Endothelial cell of umbilical vein (primary cell): ENCODE measurements at regions of chr3 and their contacts with region 1.

Region 1: GRCh38 chr3:88003115-88003755 is 55.6 kb downstream of the CGGBP1 start:
- DNase-seq: peak; percentile 64
- H3K4me3 ChIP-seq: no peak overlapping the region
- H3K27ac ChIP-seq: no peak overlapping the region
- H3K4me1 ChIP-seq: peaks cover 2% of the 10 kb centered on the region
- H3K27me3 ChIP-seq: peaks cover 0 to 7% of the 10 kb centered on the region in 2 experiments
- CTCF ChIP-seq: peak; percentile 55
- POLR2A ChIP-seq: no peak

Region 2: GRCh38 chr3:86774082-86774691 is 1229.0 kb before region 1 on chr3:
- CTCF ChIA-PET with region 1: interaction called, 29 read pairs
- POLR2A ChIA-PET with region 1: no interaction called
- dilution Hi-C with region 1: no loop called
- intact Hi-C with region 1: no loop called
- DNase-seq: peak; percentile 12
- H3K4me3 ChIP-seq: no peak overlapping the region
- H3K27ac ChIP-seq: no peak overlapping the region
- H3K4me1 ChIP-seq: no peaks in the 10 kb centered on the region
- H3K27me3 ChIP-seq: no peaks in the 10 kb centered on the region
- CTCF ChIP-seq: peak; percentile 11
- POLR2A ChIP-seq: no peak

Region 3: GRCh38 chr3:87350364-87351199 is 652.7 kb before region 1 on chr3:
- CTCF ChIA-PET with region 1: interaction called, 40 read pairs
- POLR2A ChIA-PET with region 1: no interaction called
- dilution Hi-C with region 1: no loop called
- intact Hi-C with region 1: loop called (anchors 1 kb)
- DNase-seq: peak; percentile 67
- H3K4me3 ChIP-seq: no peak overlapping the region
- H3K27ac ChIP-seq: no peak overlapping the region
- H3K4me1 ChIP-seq: no peaks in the 10 kb centered on the region
- H3K27me3 ChIP-seq: no peaks in the 10 kb centered on the region
- CTCF ChIP-seq: peak; percentile 71 to 78
- POLR2A ChIP-seq: no peak

Region 4: DNA sequence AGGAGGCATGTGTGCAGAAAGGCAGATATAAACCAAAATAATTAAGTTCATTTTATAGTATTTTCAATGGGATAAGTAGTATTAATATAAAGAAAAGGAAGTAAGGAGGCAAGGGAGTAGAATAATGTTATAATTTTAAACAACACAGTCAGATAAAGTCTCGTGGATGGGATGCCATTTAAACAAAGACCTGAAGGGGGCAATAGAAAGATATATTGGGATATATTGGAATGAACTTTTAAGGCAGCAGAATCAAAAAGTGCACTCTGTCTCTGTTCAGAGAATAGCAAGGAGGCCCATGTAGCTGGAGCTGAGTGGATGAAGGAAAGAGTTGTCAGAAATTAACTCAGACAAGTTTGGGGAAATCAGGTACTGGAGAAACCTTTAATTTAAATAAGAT is 103.2 kb before region 1 on chr3:
- CTCF ChIA-PET with region 1: interaction called, 12 read pairs
- POLR2A ChIA-PET with region 1: no interaction called
- dilution Hi-C with region 1: no loop called
- intact Hi-C with region 1: loop called (anchors 2 kb)
- DNase-seq: peak; percentile 8
- H3K4me3 ChIP-seq: no peak overlapping the region
- H3K27ac ChIP-seq: no peak overlapping the region
- H3K4me1 ChIP-seq: no peaks in the 10 kb centered on the region
- H3K27me3 ChIP-seq: peaks cover 2 to 3% of the 10 kb centered on the region in 2 experiments
- CTCF ChIP-seq: peak in 1 of 2 donors; percentile 9
- POLR2A ChIP-seq: no peak

Region 5: GRCh38 chr3:88019024-88019423 is 15.8 kb after region 1 on chr3:
- CTCF ChIA-PET with region 1: interaction called, 21 read pairs
- POLR2A ChIA-PET with region 1: no interaction called
- dilution Hi-C with region 1: no loop called
- intact Hi-C with region 1: no loop called
- DNase-seq: no peak
- H3K4me3 ChIP-seq: no peak overlapping the region
- H3K27ac ChIP-seq: no peak overlapping the region
- H3K4me1 ChIP-seq: no peaks in the 10 kb centered on the region
- H3K27me3 ChIP-seq: peaks cover 0 to 3% of the 10 kb centered on the region in 2 experiments
- CTCF ChIP-seq: no peak
- POLR2A ChIP-seq: no peak

Region 6: GRCh38 chr3:88113311-88114162 is 110.3 kb after region 1 on chr3:
- CTCF ChIA-PET with region 1: interaction called, 112 read pairs
- POLR2A ChIA-PET with region 1: no interaction called
- dilution Hi-C with region 1: no loop called
- intact Hi-C with region 1: loop called (anchors 1 kb)
- DNase-seq: peak; percentile 84
- H3K4me3 ChIP-seq: no peak overlapping the region
- H3K27ac ChIP-seq: peak overlapping the region; percentile 3
- H3K4me1 ChIP-seq: no peaks in the 10 kb centered on the region
- H3K27me3 ChIP-seq: no peaks in the 10 kb centered on the region
- CTCF ChIP-seq: peak; percentile 59 to 62
- POLR2A ChIP-seq: no peak